Esophagus muscularis mucosa (tissue), 4 donors: ENCODE measurements at regions of chr18 and their contacts with region 1.

Region 1: DNA sequence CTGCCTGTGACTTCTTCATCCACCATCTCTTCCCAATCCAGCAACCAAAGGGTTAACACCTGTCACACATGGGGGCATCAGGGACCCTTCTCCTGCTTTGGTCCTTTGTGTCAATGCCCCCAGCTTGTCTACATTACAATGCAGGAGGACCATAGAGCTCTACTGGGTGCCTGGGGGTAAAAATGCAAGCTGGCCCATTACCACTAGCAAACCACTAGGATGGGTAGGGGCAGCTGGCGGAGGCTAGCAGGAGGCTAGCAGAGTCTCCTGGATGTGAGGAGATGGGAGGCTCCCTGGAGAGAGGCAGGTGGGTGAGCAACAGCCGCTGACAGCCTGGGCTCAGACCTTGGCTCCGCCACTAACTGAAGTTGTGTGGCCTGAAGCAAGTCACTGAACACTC is 153.4 kb upstream of the SKOR2 start:
- DNase-seq: no peak
- H3K4me3 ChIP-seq: no peak overlapping the region
- H3K27ac ChIP-seq: no peak overlapping the region
- H3K4me1 ChIP-seq: no peaks in the 10 kb centered on the region
- H3K27me3 ChIP-seq: no peaks in the 10 kb centered on the region
- CTCF ChIP-seq: no peak
- EP300 ChIP-seq: no peak
- POLR2A ChIP-seq: no peak

Region 2: DNA sequence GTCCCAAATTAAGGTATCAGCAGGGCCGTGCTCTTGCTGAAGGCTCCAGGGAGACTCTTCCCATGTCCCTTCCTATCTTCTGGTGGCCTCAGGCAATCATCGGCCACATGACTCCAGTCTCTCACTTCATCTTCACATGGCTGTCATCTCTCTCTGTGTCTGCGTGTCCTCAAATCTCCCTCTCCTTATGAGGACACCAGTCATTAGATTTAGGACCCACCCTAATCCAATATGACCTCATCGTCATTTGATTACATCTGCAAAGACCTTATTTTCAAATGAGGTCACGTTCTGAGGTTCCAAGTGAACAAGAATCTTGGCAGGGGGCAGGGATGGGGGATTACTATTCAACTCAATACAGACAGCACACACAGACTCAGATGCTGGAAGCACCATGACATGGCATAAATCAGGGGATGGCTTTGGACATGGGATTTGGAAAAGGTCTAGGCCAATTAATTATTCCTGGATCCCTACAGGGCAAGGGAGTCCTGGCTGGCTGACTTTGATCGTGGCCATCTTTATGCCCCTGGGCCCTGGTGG is 56.6 kb after region 1 on chr18:
- intact Hi-C with region 1: loop called (anchors 10 kb)
- DNase-seq: no peak
- H3K4me3 ChIP-seq: no peak overlapping the region
- H3K27ac ChIP-seq: no peak overlapping the region
- H3K4me1 ChIP-seq: no peaks in the 10 kb centered on the region
- H3K27me3 ChIP-seq: peaks cover 0 to 8% (median 0%) of the 10 kb centered on the region in 4 donors
- CTCF ChIP-seq: no peak
- EP300 ChIP-seq: no peak
- POLR2A ChIP-seq: no peak